ENCODE measurements at regions of chr9 and their contacts with region 1.

Region 1: GRCh38 chr9:99807276-99807852 is 14.3 kb upstream of the NR4A3 start:
- DNase-seq: peak; percentile 73 to 82
- ATAC-seq: peak; percentile 78
- H3K4me3 ChIP-seq: no peak overlapping the region
- H3K27ac ChIP-seq: no peak overlapping the region
- H3K4me1 ChIP-seq: no peaks in the 10 kb centered on the region
- H3K27me3 ChIP-seq: no peaks in the 10 kb centered on the region

Region 2: DNA sequence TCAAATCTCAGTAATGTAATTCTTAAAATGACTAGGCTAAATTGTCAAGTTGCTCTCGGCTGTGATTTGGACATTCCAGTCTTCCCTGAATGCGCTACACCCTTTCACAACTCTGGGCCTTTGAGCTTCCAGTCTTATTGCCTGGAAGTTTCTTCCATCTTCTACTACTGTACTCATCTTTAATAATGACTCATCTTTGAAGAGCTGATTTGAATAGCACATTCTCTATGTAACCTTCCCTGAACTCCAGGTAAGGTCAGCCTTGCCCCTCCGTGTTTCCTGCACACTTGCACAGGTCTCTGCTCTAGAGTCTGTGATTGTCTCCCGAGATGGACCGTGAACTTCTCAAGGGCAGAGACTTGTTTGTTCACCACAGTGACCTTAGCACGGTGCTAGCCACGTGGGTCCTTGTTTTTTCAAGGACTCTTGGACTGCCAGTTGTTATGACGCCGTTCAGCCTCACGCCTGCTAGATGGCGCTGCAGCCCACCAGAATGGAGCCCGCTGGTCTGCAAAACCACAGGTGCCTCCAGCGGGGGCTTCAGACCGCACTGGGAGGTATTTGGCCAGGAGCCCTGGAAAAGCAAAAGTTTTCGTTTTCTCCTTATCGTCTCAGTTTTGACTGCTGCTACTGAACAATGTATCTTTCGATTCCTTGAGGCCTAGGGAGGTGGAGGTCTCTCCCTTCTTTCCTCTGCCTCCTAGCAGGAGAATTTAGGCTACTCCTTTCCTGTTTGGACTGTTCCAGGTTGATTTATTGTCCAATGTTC is 540.9 kb before region 1 on chr9:
- intact Hi-C with region 1: loop called (anchors 5 to 10 kb)
- DNase-seq: peak; percentile 74 to 90
- ATAC-seq: peak; percentile 79
- H3K4me3 ChIP-seq: no peak overlapping the region
- H3K27ac ChIP-seq: no peak overlapping the region
- H3K4me1 ChIP-seq: no peaks in the 10 kb centered on the region
- H3K27me3 ChIP-seq: no peaks in the 10 kb centered on the region

Region 3: GRCh38 chr9:99999797-100000196 is 192.4 kb after region 1 on chr9:
- intact Hi-C with region 1: loop called in 1 of 2 experiments (anchors 10 kb)
- DNase-seq: no peak
- ATAC-seq: no peak
- H3K4me3 ChIP-seq: no peak overlapping the region
- H3K27ac ChIP-seq: no peak overlapping the region
- H3K4me1 ChIP-seq: no peaks in the 10 kb centered on the region
- H3K27me3 ChIP-seq: no peaks in the 10 kb centered on the region